Vagina (tissue), 2 donors: ENCODE measurements at regions of chr17 and their contacts with region 1.

Region 1: DNA sequence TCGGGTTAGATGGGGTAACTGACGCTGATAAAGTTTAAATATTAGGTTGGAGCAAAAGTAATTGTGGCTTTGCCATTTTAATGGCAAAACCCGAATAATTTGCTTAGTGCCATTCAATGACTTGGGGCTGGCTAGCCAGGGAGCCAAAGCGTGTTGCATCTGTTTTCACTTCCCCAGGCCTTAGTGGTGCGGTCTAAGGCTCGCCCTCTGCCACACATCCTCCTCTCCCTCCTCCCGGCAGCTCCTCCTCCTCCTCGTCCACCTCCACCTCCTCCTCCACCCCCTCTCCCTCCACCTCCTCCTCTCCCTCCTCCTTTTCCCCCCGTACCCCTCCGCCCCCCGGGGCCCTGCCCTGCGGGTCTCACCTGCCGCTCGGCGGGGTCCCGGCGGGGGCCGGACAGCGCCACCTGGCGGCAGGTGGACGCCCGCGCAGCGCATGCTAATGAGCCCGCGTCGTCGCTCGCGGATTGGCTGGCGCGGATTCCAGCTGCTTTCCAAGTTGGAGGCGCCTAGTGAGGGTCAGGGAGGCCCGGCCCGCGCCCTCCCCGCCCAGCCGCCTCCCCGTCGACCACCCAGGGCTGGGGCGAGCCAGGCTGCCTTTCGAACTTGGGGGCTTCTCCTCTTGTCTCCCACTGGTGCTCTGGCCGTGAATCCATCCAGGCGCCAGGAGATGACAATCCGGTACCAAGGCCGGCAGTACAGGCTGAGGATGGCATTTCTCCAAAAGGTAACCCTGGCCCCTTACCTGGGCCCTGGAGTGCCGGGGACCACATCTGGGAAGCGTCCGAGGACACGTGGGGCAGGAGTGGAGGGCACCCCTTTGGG is 36.6 kb upstream of the RGS9 start:
- DNase-seq: no peak
- H3K4me3 ChIP-seq: peak overlapping the region; percentile 49 to 54
- H3K27ac ChIP-seq: peak overlapping the region; percentile 82
- H3K4me1 ChIP-seq: peaks cover 16% of the 10 kb centered on the region
- H3K27me3 ChIP-seq: no peaks in the 10 kb centered on the region
- CTCF ChIP-seq: peak; percentile 67 to 96 (median 86)
- POLR2A ChIP-seq: no peak

Region 2: GRCh38 chr17:64975329-64976087 is 125.0 kb before region 1 on chr17:
- intact Hi-C with region 1: loop called (anchors 5 kb)
- DNase-seq: peak in 1 of 2 donors; percentile 96
- H3K4me3 ChIP-seq: peak overlapping the region; percentile 74
- H3K27ac ChIP-seq: peak overlapping the region; percentile 96
- H3K4me1 ChIP-seq: peaks cover 23% of the 10 kb centered on the region
- H3K27me3 ChIP-seq: no peaks in the 10 kb centered on the region
- CTCF ChIP-seq: no peak
- POLR2A ChIP-seq: peak; percentile 78 to 95

Region 3: DNA sequence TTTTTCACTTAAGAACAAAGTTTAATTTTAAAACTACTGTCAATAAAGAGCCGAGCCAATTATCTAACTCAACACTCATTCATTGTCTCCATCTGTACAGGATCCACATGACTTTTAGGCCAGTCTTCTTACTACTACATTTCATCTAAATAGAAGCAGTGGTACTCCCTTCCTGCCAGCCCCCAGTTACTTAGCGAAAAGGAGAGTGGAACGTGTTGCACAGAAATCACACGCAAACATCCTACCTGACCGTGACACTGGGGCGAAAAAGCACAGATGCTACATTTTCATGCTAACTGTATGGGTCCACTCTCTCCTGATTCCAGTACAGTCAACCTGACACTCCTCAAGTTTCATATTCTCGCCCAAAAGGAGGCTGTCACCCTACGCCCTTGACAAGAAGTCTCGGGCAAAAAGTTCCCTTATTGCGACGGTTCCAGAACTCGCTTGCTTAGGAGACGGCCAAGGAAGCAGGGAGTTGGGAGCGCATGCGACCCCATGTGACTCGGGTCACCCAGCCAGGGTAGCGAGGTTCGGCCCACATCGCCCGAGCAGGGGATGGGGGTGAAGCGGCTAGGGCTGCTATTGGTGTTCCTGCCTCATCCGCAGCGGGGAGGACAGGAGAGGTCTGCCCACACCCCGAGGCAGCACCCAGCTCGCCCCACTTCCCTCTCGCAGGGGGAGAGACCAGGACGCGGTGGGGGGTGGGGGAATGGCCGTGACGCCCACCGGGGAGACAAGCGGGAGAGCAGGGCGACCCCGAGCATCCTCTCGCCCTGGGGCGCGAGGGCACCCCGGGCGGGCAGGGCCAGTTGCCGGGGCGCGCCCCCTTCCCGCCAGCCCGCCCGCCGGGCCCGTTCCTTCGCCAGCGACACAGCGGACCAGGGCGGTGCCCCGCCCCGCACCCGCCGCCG is 44.9 kb before region 1 on chr17:
- intact Hi-C with region 1: loop called (anchors 2 kb)
- DNase-seq: peak in 1 of 2 donors; percentile 93
- H3K4me3 ChIP-seq: peak overlapping the region; percentile 77 to 85
- H3K27ac ChIP-seq: peak overlapping the region; percentile 99
- H3K4me1 ChIP-seq: peaks cover 53% of the 10 kb centered on the region
- H3K27me3 ChIP-seq: no peaks in the 10 kb centered on the region
- CTCF ChIP-seq: no peak
- POLR2A ChIP-seq: peak in 1 of 2 donors; percentile 19

Region 4: GRCh38 chr17:65183736-65184135 is 83.2 kb after region 1 on chr17:
- intact Hi-C with region 1: no loop called
- DNase-seq: no peak
- H3K4me3 ChIP-seq: no peak overlapping the region
- H3K27ac ChIP-seq: no peak overlapping the region
- H3K4me1 ChIP-seq: peaks cover 4% of the 10 kb centered on the region
- H3K27me3 ChIP-seq: no peaks in the 10 kb centered on the region
- CTCF ChIP-seq: no peak
- POLR2A ChIP-seq: no peak

Region 5: GRCh38 chr17:65198653-65199382 is 98.3 kb after region 1 on chr17:
- intact Hi-C with region 1: no loop called
- DNase-seq: no peak
- H3K4me3 ChIP-seq: no peak overlapping the region
- H3K27ac ChIP-seq: no peak overlapping the region
- H3K4me1 ChIP-seq: no peaks in the 10 kb centered on the region
- H3K27me3 ChIP-seq: no peaks in the 10 kb centered on the region
- CTCF ChIP-seq: peak; percentile 51 to 79 (median 74)
- POLR2A ChIP-seq: no peak

Region 6: DNA sequence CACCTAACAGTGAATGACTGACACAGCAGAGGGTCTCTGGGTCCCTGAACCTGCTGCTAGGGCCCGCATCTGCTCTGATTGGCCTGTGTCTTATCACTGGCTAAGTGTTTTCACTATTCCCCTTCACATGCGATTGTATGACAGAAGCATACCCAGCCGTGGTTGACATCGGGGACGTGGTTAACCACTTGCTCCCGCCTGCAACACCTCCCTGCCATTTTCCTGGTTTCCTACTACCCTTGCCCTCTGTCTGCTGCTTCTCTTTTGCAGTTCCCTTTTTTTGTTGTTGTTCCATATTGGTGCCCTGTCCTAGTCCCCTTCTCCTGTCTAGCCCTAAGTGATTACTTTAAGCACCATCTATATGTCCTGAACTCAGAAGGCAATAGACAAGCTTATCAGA is 213.7 kb after region 1 on chr17:
- intact Hi-C with region 1: no loop called
- DNase-seq: no peak
- H3K4me3 ChIP-seq: no peak overlapping the region
- H3K27ac ChIP-seq: no peak overlapping the region
- H3K4me1 ChIP-seq: no peaks in the 10 kb centered on the region
- H3K27me3 ChIP-seq: no peaks in the 10 kb centered on the region
- CTCF ChIP-seq: no peak
- POLR2A ChIP-seq: no peak